B cell (primary cell): ENCODE measurements at regions of chr14 and their contacts with region 1.

Region 1: GRCh38 chr14:51157012-51157411 is 62.1 kb upstream of the TRIM9 start:
- DNase-seq: peak; percentile 24
- ATAC-seq: no peak
- H3K4me3 ChIP-seq: no peak overlapping the region
- H3K4me3 Mint-ChIP-seq: no peak overlapping the region
- H3K27ac ChIP-seq: no peak overlapping the region
- H3K27ac Mint-ChIP-seq: no peak overlapping the region
- H3K4me1 ChIP-seq: peaks cover 6 to 7% of the 10 kb centered on the region in 2 donors
- H3K4me1 Mint-ChIP-seq: peaks cover 13% of the 10 kb centered on the region
- H3K27me3 ChIP-seq: no peaks in the 10 kb centered on the region
- H3K27me3 Mint-ChIP-seq: no peaks in the 10 kb centered on the region
- CTCF ChIP-seq: peak; percentile 43

Region 2: DNA sequence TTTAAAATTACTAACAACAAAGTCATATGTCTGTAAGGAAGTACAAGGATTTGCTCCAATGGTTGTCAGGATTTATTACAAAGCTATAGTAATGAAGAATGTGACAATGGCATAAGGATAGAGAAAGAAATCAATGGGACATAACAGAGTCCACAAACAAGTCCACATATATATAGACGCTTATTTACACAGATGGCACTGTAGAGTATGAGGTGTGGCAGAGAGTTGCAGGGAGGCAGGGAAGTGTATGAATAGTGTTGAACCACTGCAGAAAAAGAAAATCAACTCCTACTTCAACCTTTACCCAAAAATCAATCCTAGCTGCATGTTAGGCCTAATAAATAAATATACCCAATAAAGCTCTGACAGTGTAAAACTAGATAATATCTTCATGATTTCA is 946.9 kb before region 1 on chr14:
- CTCF ChIA-PET with region 1: no interaction called
- POLR2A ChIA-PET with region 1: no interaction called
- intact Hi-C with region 1: no loop called
- DNase-seq: no peak
- ATAC-seq: no peak
- H3K4me3 ChIP-seq: no peak overlapping the region
- H3K4me3 Mint-ChIP-seq: no peak overlapping the region
- H3K27ac ChIP-seq: no peak overlapping the region
- H3K27ac Mint-ChIP-seq: no peak overlapping the region
- H3K4me1 ChIP-seq: no peaks in the 10 kb centered on the region
- H3K4me1 Mint-ChIP-seq: peaks cover 6% of the 10 kb centered on the region
- H3K27me3 ChIP-seq: no peaks in the 10 kb centered on the region
- H3K27me3 Mint-ChIP-seq: no peaks in the 10 kb centered on the region
- CTCF ChIP-seq: no peak

Region 3: GRCh38 chr14:51145246-51145645 is 11.8 kb before region 1 on chr14:
- CTCF ChIA-PET with region 1: no interaction called
- POLR2A ChIA-PET with region 1: no interaction called
- intact Hi-C with region 1: no loop called
- DNase-seq: no peak
- ATAC-seq: no peak
- H3K4me3 ChIP-seq: no peak overlapping the region
- H3K4me3 Mint-ChIP-seq: no peak overlapping the region
- H3K27ac ChIP-seq: no peak overlapping the region
- H3K27ac Mint-ChIP-seq: no peak overlapping the region
- H3K4me1 ChIP-seq: no peaks in the 10 kb centered on the region
- H3K4me1 Mint-ChIP-seq: no peaks in the 10 kb centered on the region
- H3K27me3 ChIP-seq: no peaks in the 10 kb centered on the region
- H3K27me3 Mint-ChIP-seq: peaks cover 4% of the 10 kb centered on the region
- CTCF ChIP-seq: no peak

Region 4: GRCh38 chr14:51202914-51203665 is 46.1 kb after region 1 on chr14:
- CTCF ChIA-PET with region 1: interaction called, 8 read pairs
- POLR2A ChIA-PET with region 1: no interaction called
- intact Hi-C with region 1: loop called (anchors 1 kb)
- DNase-seq: peak; percentile 57
- ATAC-seq: peak; percentile 86
- H3K4me3 ChIP-seq: no peak overlapping the region
- H3K4me3 Mint-ChIP-seq: peak overlapping the region; percentile 64
- H3K27ac ChIP-seq: no peak overlapping the region
- H3K27ac Mint-ChIP-seq: peak overlapping the region; percentile 71
- H3K4me1 ChIP-seq: peaks cover 29 to 30% of the 10 kb centered on the region in 2 donors
- H3K4me1 Mint-ChIP-seq: peaks cover 33% of the 10 kb centered on the region
- H3K27me3 ChIP-seq: peaks cover 0 to 5% (median 1%) of the 10 kb centered on the region in 4 experiments
- H3K27me3 Mint-ChIP-seq: peaks cover 12% of the 10 kb centered on the region
- CTCF ChIP-seq: no peak

Region 5: GRCh38 chr14:51342241-51342691 is 185.3 kb after region 1 on chr14:
- CTCF ChIA-PET with region 1: no interaction called
- POLR2A ChIA-PET with region 1: no interaction called
- intact Hi-C with region 1: no loop called
- DNase-seq: no peak
- ATAC-seq: no peak
- H3K4me3 ChIP-seq: no peak overlapping the region
- H3K4me3 Mint-ChIP-seq: no peak overlapping the region
- H3K27ac ChIP-seq: no peak overlapping the region
- H3K27ac Mint-ChIP-seq: no peak overlapping the region
- H3K4me1 ChIP-seq: no peaks in the 10 kb centered on the region
- H3K4me1 Mint-ChIP-seq: no peaks in the 10 kb centered on the region
- H3K27me3 ChIP-seq: no peaks in the 10 kb centered on the region
- H3K27me3 Mint-ChIP-seq: peaks cover 8% of the 10 kb centered on the region
- CTCF ChIP-seq: no peak